Common myeloid progenitor, CD34-positive (primary cell): ENCODE measurements at regions of chr2 and their contacts with region 1.

Region 1: GRCh38 chr2:233100192-233100998 is 40.3 kb downstream of the INPP5D start:
- DNase-seq: peak; percentile 63 to 88 (median 86)
- H3K4me3 ChIP-seq: peak overlapping the region in 3 of 7 experiments; percentile 2 to 34 (median 22)
- H3K27ac ChIP-seq: peak overlapping the region; percentile 42 to 67
- H3K4me1 ChIP-seq: peaks cover 25 to 48% (median 32%) of the 10 kb centered on the region in 4 experiments
- H3K27me3 ChIP-seq: no peaks in the 10 kb centered on the region

Region 2: GRCh38 chr2:233084488-233084887 is 15.9 kb before region 1 on chr2:
- CTCF ChIA-PET with region 1: interaction called, 29 read pairs
- POLR2A ChIA-PET with region 1: interaction called, 4 read pairs
- DNase-seq: peak; percentile 64 to 93 (median 90)
- H3K4me3 ChIP-seq: peak overlapping the region in 5 of 7 experiments; percentile 13 to 52 (median 49)
- H3K27ac ChIP-seq: peak overlapping the region; percentile 83 to 88
- H3K4me1 ChIP-seq: peaks cover 52 to 96% (median 88%) of the 10 kb centered on the region in 4 experiments
- H3K27me3 ChIP-seq: no peaks in the 10 kb centered on the region

Region 3: GRCh38 chr2:233114421-233114861 is 14.0 kb after region 1 on chr2:
- CTCF ChIA-PET with region 1: interaction called, 11 read pairs
- POLR2A ChIA-PET with region 1: no interaction called
- DNase-seq: no peak
- H3K4me3 ChIP-seq: no peak overlapping the region
- H3K27ac ChIP-seq: peak overlapping the region in 1 of 2 experiments; percentile 53
- H3K4me1 ChIP-seq: peaks cover 0 to 34% (median 18%) of the 10 kb centered on the region in 4 experiments
- H3K27me3 ChIP-seq: no peaks in the 10 kb centered on the region

Region 4: GRCh38 chr2:233210843-233211547 is 110.6 kb after region 1 on chr2:
- CTCF ChIA-PET with region 1: no interaction called
- POLR2A ChIA-PET with region 1: no interaction called
- DNase-seq: peak in 1 of 3 donors; percentile 28
- H3K4me3 ChIP-seq: no peak overlapping the region
- H3K27ac ChIP-seq: no peak overlapping the region
- H3K4me1 ChIP-seq: peaks cover 2 to 22% (median 6%) of the 10 kb centered on the region in 4 experiments
- H3K27me3 ChIP-seq: no peaks in the 10 kb centered on the region